Heart right ventricle (tissue), 16 donors: ENCODE measurements at regions of chr5 and their contacts with region 1.

Region 1: DNA sequence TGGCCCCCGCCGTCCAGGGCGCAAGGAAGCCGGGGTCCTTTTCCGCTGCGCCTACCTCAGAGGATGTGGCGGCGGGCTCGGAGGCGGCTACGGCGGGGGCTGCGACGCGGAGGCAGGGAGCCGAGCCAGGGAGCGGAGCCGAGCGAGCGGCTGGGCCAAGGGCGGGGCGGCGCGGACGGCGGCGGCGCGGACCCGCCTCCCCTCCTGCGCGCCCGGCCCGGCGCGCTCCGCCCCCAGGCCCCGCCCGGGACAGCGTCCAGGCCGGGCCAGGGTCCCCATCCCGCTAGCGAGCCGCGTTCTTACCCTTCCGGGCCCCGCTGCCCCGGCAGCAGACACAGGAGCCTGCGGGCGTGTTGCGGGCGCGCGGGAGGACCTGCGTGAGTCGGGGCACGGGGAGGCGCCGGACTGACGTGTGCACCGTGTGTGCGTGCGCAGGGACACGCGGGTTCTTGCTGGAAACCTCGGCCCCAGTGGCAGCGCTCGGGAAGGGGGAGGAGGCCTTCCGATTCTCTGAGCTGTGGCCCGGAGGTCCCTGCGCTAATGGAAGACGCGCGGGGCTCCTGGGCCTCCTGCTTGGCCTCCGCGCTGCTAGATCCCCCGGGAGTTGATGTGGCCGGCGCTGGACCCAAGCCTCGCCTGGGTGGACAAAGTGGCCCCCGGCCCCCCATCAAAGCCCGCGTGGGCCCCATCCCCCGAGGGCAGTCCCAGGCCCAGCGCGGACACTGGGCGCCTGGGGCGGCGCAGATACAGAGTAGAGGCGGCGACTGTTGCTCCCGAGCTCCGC is at the start of gene VDAC1:
- DNase-seq: peak; percentile 83
- ATAC-seq: peak; percentile 83 to 93 (median 84)
- H3K4me3 ChIP-seq: peak within 1 kb of the TSS; percentile 16 to 96 (median 82)
- H3K27ac ChIP-seq: peak within 1 kb of the TSS; percentile 91 to 100 (median 99)
- H3K4me1 ChIP-seq: peaks cover 20 to 58% (median 48%) of the 10 kb centered on the region in 9 donors
- H3K27me3 ChIP-seq: no peaks in the 10 kb centered on the region
- CTCF ChIP-seq: peak in 2 of 9 donors; percentile 14 to 38
- total RNA-seq, gene VDAC1: 440 to 609 (median 535) TPM

Region 2: GRCh38 chr5:133968049-133968980 is 36.5 kb before region 1 on chr5 and contains the start of gene C5orf15:
- intact Hi-C with region 1: loop called in 1 of 10 experiments (anchors 1 kb)
- DNase-seq: peak; percentile 93 to 95
- ATAC-seq: peak; percentile 97 to 99 (median 98)
- H3K4me3 ChIP-seq: peak within 1 kb of the TSS; percentile 70 to 91 (median 78)
- H3K27ac ChIP-seq: peak within 1 kb of the TSS; percentile 83 to 98 (median 90)
- H3K4me1 ChIP-seq: peaks cover 0 to 39% (median 29%) of the 10 kb centered on the region in 9 donors
- H3K27me3 ChIP-seq: no peaks in the 10 kb centered on the region
- CTCF ChIP-seq: peak in 5 of 9 donors; percentile 7 to 44 (median 38)
- total RNA-seq, gene C5orf15: 31.0 to 55.3 (median 34.2) TPM

Region 3: GRCh38 chr5:133981714-133982113 is 23.1 kb before region 1 on chr5:
- intact Hi-C with region 1: no loop called
- DNase-seq: no peak
- ATAC-seq: no peak
- H3K4me3 ChIP-seq: no peak overlapping the region
- H3K27ac ChIP-seq: peak overlapping the region in 1 of 10 donors; percentile 37
- H3K4me1 ChIP-seq: peaks cover 2 to 63% (median 28%) of the 10 kb centered on the region in 9 donors
- H3K27me3 ChIP-seq: no peaks in the 10 kb centered on the region
- CTCF ChIP-seq: no peak